Endothelial cell of umbilical vein (primary cell): ENCODE measurements at regions of chr11 and their contacts with region 1.

Region 1: DNA sequence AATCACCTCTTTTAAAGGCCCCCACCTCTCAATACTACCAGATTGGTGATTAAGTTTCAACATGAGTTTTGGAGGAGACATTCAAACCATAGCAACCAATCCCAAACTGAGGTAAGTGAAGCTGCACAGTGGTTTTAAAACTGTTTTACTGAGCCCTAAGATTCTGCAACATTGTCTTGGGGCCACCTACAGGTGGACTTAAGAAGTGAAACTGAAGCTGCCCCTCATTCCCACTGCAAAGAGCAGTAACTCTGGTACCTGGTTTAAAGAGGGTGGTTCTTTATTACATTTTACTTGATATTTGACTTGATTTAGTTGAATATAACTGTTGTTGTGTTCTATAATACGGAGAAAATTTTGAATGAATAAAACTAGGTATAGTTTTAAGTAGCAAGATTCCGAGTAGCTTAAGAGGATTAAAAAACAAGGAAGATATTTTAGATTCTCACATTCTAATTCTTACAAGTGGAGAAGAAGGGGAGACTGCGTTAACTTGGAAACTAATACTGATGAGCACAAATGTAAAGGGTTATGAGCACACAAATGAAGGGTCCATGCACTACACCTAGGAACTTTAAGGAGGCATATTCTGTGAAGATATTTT is 26.7 kb downstream of the SYT9 start:
- DNase-seq: peak; percentile 42
- H3K4me3 ChIP-seq: no peak overlapping the region
- H3K27ac ChIP-seq: no peak overlapping the region
- H3K4me1 ChIP-seq: no peaks in the 10 kb centered on the region
- H3K27me3 ChIP-seq: no peaks in the 10 kb centered on the region
- CTCF ChIP-seq: peak; percentile 46 to 64
- POLR2A ChIP-seq: no peak

Region 2: DNA sequence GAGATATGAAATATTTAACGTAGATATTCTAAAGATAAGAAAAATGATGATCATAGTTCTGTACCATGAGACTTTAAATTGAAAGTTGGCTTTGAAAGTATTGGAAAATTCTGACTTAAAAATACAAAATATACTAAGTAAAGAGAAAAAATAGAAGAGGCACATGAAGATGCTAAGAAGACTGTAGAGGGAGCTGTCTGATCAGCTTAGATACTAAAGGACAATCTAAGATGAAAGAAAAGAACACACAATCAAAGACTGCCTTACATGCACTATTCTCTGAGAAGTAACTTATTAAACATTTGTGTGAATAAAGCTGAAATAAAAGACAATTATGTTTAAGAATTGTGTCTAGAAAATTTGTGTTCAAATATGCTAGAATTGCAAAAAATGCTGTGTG is 134.5 kb before region 1 on chr11:
- CTCF ChIA-PET with region 1: interaction called, 35 read pairs
- POLR2A ChIA-PET with region 1: no interaction called
- dilution Hi-C with region 1: no loop called
- intact Hi-C with region 1: loop called (anchors 1 kb)
- DNase-seq: peak; percentile 22
- H3K4me3 ChIP-seq: no peak overlapping the region
- H3K27ac ChIP-seq: no peak overlapping the region
- H3K4me1 ChIP-seq: no peaks in the 10 kb centered on the region
- H3K27me3 ChIP-seq: no peaks in the 10 kb centered on the region
- CTCF ChIP-seq: peak in 1 of 2 donors; percentile 14
- POLR2A ChIP-seq: no peak

Region 3: GRCh38 chr11:7291100-7291829 is 12.8 kb after region 1 on chr11:
- CTCF ChIA-PET with region 1: interaction called, 14 read pairs
- POLR2A ChIA-PET with region 1: no interaction called
- dilution Hi-C with region 1: no loop called
- intact Hi-C with region 1: no loop called
- DNase-seq: no peak
- H3K4me3 ChIP-seq: no peak overlapping the region
- H3K27ac ChIP-seq: no peak overlapping the region
- H3K4me1 ChIP-seq: no peaks in the 10 kb centered on the region
- H3K27me3 ChIP-seq: no peaks in the 10 kb centered on the region
- CTCF ChIP-seq: no peak
- POLR2A ChIP-seq: no peak